ENCODE measurements at regions of chr19 and their contacts with region 1.

Region 1: DNA sequence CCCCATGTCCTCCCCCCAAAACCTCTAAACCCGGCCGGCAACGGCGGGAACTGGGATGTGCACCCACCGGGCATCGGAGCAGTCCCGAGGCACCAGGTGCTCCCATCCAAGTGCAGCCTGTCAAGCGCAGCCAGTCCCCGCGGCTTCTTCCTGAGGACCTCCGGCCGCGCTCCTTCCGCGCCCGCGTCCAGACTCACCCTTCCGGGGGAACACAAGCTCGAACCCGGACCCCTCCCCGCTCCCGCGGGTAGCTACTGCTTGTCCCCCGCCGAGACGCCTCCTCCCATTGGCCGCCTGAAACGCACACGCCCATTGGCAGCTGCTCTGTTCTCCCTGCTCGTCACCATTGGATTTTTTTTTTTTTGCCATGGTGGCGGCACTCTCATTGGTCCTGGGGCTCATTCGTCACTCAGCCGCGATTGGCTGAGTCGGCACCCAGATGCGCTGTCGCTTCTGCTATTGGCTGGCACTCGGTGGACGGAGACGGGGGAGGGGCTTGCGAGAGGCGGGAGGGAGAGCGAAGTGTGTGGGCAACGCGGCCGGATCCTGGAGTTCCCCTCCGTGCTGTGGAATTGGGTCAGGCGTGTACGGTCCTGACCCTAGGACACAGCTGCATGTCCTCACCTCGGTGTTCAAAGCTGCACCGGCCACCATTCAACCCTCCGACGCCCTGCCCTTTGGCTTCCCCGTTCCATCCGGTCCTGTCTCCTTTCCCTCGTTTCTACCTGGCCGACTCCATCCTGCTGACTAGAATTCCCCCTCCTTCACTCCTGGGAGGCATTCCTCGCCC is at the start of gene TYK2:
- DNase-seq: peak; percentile 98
- total RNA-seq, gene TYK2: 67.1 to 69.3 TPM

Region 2: GRCh38 chr19:10277795-10278589 is 102.5 kb before region 1 on chr19:
- intact Hi-C with region 1: loop called in 1 of 2 experiments (anchors 2 kb)
- DNase-seq: no peak

Region 3: DNA sequence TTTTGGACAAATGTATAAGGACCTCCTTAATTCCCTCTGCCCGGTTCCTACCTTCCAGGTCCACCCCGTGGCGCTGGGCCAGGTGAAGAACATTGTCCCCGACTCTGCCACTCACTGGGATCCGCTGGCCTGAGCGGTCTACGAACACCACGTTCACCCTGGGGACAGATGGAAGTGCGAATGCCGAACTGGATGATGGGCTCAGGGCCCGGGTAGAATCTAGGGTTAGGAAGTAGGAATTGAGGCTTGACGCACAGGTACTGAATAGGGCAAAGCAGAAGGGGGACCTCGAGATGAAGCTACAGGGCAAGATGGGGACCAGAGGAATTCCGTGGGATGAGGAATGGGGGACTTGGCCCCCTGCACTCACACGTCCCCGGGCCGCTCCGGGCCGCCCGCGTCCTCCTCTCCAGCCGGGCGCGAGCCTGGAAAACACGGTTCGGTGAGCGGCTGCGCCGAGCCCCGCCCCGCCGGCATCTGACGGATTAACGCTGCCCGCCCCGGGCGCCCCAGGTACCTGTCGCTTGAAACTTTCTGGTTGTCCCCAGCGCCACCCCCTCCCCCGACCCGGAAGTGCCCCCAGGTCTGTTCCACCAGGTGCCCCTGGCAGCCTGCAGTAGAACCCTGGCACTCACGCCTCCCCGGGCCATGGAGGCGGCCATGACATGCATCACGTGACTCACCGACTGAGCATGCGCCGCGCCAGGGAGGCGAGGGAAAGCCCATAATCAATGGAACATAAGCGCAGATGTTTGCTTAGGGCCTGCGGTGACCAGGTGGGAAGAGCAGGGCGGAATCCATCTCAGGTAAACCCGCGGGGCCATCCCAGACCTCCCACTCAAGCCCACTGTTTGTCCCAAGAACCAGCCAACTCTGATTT is 64.9 kb before region 1 on chr19 and contains the start of gene FDX2:
- intact Hi-C with region 1: no loop called
- DNase-seq: peak; percentile 96
- total RNA-seq, gene FDX2: 10.2 to 11.4 TPM

Region 4: GRCh38 chr19:10334588-10335351 is 45.7 kb before region 1 on chr19:
- intact Hi-C with region 1: loop called in 1 of 2 experiments (anchors 5 kb)
- DNase-seq: peak; percentile 98